HEK293 (cell line): ENCODE measurements at regions of chr21 and their contacts with region 1.

Region 1: DNA sequence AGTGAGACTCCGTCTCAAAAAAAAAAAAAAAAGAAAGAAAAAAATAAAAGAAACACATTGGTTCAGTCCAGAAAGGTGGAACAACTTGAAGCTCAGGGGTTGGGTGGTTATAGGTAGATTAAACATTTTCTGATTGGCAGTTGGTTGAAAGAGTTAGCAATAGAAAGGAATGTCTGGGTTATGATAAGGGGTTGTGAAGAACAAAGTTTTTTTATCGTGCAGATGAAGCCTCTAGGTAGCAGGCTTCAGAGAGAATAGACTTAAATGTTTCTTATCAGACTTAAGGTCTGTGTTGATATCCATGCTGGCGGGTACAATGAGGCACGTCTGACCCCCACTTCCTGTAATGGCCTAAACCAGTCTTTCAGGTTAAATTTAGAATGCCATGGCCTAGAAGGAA is 45.0 kb upstream of the PDE9A start:
- H3K4me3 ChIP-seq: no peak overlapping the region
- H3K27ac ChIP-seq: no peak overlapping the region
- H3K4me1 ChIP-seq: no peaks in the 10 kb centered on the region
- CTCF ChIP-seq: no peak

Region 2: DNA sequence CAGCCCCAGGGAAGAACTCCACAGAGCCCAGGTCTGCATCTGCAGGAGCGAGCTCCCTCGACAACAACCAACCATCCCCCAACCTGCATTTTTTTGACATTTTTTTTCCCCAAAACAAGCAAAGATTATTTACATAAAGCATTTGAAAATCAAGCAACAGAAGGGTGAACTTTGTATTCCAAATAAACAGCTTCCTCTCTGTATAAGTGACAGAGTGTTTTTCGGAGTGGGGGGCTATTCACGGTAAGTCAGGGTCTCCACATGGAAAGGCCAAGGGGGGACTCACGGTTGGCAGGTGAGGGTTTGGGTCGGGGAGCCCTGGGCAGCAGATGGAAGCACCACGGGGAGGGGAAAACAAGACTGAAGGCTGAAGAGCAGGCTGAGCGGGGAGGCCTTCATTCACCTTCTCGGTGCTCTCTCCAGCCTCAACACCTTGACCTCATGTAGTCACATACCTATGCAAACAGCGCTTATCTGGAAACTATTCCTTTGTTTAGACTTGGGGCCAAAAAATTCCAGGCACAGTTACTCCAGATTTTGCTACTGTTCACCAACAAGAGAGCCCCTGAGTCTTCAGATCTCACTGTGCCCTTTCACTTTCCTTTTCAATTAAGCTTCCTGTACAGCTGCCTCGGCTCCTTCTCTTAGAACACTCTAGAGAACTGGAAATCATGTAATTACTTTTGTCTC is 682.2 kb before region 1 on chr21:
- CTCF ChIA-PET with region 1: interaction called, 10 read pairs
- POLR2A ChIA-PET with region 1: no interaction called
- H3K4me3 ChIP-seq: no peak overlapping the region
- H3K27ac ChIP-seq: no peak overlapping the region
- H3K4me1 ChIP-seq: no peaks in the 10 kb centered on the region
- CTCF ChIP-seq: no peak